Naive thymus-derived CD4-positive, alpha-beta T cell (primary cell): ENCODE measurements at regions of chr1 and their contacts with region 1.

Region 1: DNA sequence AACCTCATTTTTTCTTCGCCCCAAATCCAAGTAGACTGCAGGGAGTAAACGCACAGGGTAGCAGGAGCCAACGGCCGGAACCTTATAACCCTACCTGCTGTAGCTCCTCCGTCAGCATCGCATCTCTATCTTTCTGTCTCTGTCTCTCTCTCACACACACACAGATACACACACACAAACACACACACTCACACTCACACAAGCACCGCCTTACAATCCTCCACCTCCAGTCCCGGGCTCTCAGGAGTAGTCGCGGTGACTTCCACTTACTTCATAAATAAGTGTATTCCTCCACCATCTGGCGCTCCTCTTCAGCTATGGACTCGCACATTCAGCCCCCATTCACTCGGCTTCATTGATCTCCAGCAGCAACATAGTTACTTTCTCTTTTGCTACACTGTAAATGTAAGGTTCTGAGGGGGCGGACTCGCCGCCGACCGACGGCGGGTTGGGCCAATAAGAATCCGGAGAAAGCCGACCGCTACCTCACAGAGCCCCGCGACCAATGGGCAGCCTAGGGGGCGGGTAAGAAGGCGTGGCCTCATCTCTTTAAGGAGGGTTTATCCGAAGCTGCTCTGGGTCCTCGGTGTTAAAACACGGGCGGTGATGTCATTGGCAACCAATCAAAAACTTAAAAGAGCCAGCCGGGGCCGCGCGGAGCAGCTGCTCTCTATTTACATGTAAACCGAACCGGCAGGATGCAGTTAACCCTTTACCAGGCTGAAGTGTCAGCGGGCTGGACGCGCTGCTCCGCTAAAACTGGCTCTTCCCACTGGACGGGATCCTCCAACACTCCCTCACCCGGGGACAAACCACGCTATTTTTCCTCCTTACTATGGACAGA is at the start of gene DUSP10:
- DNase-seq: peak; percentile 88 to 100 (median 99)
- ATAC-seq: peak; percentile 91
- H3K4me3 ChIP-seq: peak within 1 kb of the TSS; percentile 85
- H3K4me3 Mint-ChIP-seq: peak within 1 kb of the TSS in 1 of 10 donors; percentile 33
- H3K27ac ChIP-seq: peak within 1 kb of the TSS; percentile 94
- H3K27ac Mint-ChIP-seq: peak within 1 kb of the TSS in 3 of 9 donors; percentile 39 to 83 (median 50)
- H3K4me1 ChIP-seq: peaks cover 9 to 17% of the 10 kb centered on the region in 2 donors
- H3K4me1 Mint-ChIP-seq: peaks cover 0 to 32% (median 21%) of the 10 kb centered on the region in 7 donors
- H3K27me3 ChIP-seq: no peaks in the 10 kb centered on the region
- H3K27me3 Mint-ChIP-seq: no peaks in the 10 kb centered on the region
- total RNA-seq, gene DUSP10: 2.5 to 60.6 (median 19.0) TPM

Region 2: GRCh38 chr1:221543529-221544120 is 198.3 kb before region 1 on chr1:
- CTCF ChIA-PET with region 1: interaction called, 3 read pairs
- POLR2A ChIA-PET with region 1: interaction called, 3 read pairs
- intact Hi-C with region 1: loop called (anchors 1 kb)
- DNase-seq: peak in 1 of 9 donors; percentile 4
- ATAC-seq: no peak
- H3K4me3 ChIP-seq: no peak overlapping the region
- H3K4me3 Mint-ChIP-seq: no peak overlapping the region
- H3K27ac ChIP-seq: no peak overlapping the region
- H3K27ac Mint-ChIP-seq: peak overlapping the region in 1 of 9 donors; percentile 21
- H3K4me1 ChIP-seq: no peaks in the 10 kb centered on the region
- H3K4me1 Mint-ChIP-seq: peaks cover 0 to 3% (median 0%) of the 10 kb centered on the region in 7 donors
- H3K27me3 ChIP-seq: no peaks in the 10 kb centered on the region
- H3K27me3 Mint-ChIP-seq: peaks cover 5 to 27% (median 13%) of the 10 kb centered on the region in 5 donors

Region 3: DNA sequence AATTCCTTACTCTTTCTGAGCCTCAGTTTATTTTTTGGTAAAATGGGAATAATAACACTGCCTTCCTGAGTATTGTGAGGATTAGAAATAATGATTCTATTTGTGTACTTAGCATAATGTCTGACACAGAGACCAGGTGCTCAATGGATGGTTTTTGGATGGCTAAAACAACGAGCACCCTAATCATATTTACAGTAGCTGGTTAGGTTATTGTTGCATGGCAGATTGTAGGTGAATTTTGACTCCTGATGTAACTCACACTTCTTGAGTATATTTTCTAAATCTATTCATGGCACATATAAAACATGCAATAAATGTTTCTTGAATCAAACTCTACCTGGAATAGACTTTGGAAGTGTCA is 11.9 kb after region 1 on chr1:
- CTCF ChIA-PET with region 1: interaction called, 3 read pairs
- POLR2A ChIA-PET with region 1: interaction called, 4 read pairs
- intact Hi-C with region 1: loop called in 1 of 2 experiments (anchors 1 kb)
- DNase-seq: no peak
- ATAC-seq: no peak
- H3K4me3 ChIP-seq: no peak overlapping the region
- H3K4me3 Mint-ChIP-seq: peak overlapping the region in 1 of 10 donors; percentile 67
- H3K27ac ChIP-seq: no peak overlapping the region
- H3K27ac Mint-ChIP-seq: peak overlapping the region in 1 of 9 donors; percentile 60
- H3K4me1 ChIP-seq: no peaks in the 10 kb centered on the region
- H3K4me1 Mint-ChIP-seq: peaks cover 0 to 59% (median 4%) of the 10 kb centered on the region in 7 donors
- H3K27me3 ChIP-seq: no peaks in the 10 kb centered on the region
- H3K27me3 Mint-ChIP-seq: no peaks in the 10 kb centered on the region

Region 4: DNA sequence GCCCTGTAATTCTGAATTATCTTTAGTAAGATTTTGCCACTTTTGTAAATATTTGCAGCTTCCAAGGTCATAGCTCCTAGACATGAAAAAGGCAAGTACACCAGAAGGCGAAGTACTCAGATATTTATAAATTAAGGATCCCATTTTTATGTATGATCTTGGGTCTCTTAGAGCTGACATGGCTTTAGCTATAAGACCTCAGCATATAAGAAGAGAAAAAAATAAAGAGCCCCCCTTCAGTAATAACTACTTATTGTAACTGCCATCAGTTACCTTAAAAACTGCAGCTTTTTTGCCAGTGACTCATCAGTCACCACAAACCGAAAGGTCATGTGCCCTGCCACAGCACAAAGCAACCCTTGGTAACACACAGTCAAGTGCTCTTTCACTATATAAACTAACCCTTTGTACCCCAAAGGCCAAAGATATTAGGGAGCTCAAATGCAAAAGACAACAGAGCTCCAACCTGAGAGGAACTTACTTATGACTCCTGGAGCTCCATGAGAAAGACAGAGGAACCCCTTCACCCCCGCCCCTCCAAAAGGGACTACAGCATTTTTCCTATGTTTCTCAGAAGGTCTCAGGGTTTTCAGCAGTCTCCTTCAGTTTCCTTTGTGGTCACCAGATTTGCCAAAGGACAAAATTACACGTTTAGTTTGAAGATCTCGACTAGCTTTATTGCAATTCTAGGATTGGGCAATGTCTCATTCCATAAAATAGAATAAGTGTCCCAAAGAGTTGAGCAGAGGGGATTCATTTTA is 219.8 kb after region 1 on chr1:
- CTCF ChIA-PET with region 1: no interaction called
- POLR2A ChIA-PET with region 1: no interaction called
- intact Hi-C with region 1: loop called in 1 of 2 experiments (anchors 2 kb)
- DNase-seq: peak in 1 of 9 donors; percentile 57
- ATAC-seq: peak; percentile 67
- H3K4me3 ChIP-seq: no peak overlapping the region
- H3K4me3 Mint-ChIP-seq: peak overlapping the region in 1 of 10 donors; percentile 34
- H3K27ac ChIP-seq: no peak overlapping the region
- H3K27ac Mint-ChIP-seq: peak overlapping the region in 1 of 9 donors; percentile 54
- H3K4me1 ChIP-seq: no peaks in the 10 kb centered on the region
- H3K4me1 Mint-ChIP-seq: peaks cover 0 to 20% (median 3%) of the 10 kb centered on the region in 7 donors
- H3K27me3 ChIP-seq: no peaks in the 10 kb centered on the region
- H3K27me3 Mint-ChIP-seq: no peaks in the 10 kb centered on the region

Region 5: DNA sequence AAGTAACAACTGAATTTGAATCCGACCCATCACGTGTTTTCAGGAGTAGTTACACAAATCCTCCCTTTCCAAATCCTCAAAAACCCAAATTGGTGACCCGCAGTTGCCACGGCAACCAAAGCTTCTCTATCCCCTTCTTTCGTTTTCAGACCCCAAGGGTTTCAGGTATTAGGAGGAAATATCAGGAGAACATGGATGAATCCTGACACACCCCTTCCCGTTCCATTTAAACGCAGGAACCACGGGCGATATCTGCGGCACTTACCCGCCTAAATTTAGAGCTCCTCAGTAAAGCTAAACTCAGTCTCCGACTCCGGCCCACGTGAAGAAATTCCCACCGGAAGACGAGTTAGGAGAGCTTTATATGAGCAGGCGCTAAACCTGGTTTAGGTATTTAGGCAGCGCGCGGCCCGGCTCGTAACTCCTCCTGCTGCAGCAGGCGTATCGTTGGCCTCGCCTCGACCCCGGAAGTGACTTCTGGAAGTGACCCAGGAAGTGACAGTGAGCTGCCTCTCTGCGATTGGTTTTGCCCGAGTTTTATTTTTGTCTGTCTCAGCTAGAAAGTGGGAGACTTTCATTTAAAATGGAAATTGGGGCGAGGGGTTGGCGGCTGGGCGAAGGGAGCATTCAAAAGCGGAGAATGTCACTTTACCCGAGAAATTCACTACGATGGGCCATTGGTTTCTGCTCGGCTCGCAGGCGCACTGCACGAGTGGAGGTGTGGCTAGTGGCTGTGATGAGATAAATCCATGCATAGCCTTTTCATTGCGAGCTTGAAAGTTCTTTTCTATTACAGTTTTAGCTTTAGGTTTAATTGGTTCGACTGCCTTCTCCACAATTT is 847.7 kb after region 1 on chr1 and contains the start of gene TAF1A:
- CTCF ChIA-PET with region 1: no interaction called
- POLR2A ChIA-PET with region 1: no interaction called
- intact Hi-C with region 1: loop called in 1 of 2 experiments (anchors 1 kb)
- DNase-seq: peak; percentile 53 to 92 (median 87)
- ATAC-seq: peak; percentile 100
- H3K4me3 ChIP-seq: peak within 1 kb of the TSS; percentile 93
- H3K4me3 Mint-ChIP-seq: peak within 1 kb of the TSS; percentile 86 to 99 (median 96)
- H3K27ac ChIP-seq: peak within 1 kb of the TSS; percentile 85
- H3K27ac Mint-ChIP-seq: peak within 1 kb of the TSS; percentile 94 to 99 (median 97)
- H3K4me1 ChIP-seq: peaks cover 6 to 18% of the 10 kb centered on the region in 2 donors
- H3K4me1 Mint-ChIP-seq: peaks cover 21 to 68% (median 57%) of the 10 kb centered on the region in 7 donors
- H3K27me3 ChIP-seq: no peaks in the 10 kb centered on the region
- H3K27me3 Mint-ChIP-seq: peaks cover 0 to 4% (median 0%) of the 10 kb centered on the region in 5 donors
- total RNA-seq, gene TAF1A: 6.5 to 17.9 (median 9.3) TPM

Region 6: GRCh38 chr1:223142795-223143536 is 1401.0 kb after region 1 on chr1 and contains the start of gene TLR5:
- CTCF ChIA-PET with region 1: no interaction called
- POLR2A ChIA-PET with region 1: no interaction called
- intact Hi-C with region 1: loop called in 1 of 2 experiments (anchors 5 kb)
- DNase-seq: peak; percentile 81 to 92 (median 87)
- ATAC-seq: peak; percentile 94
- H3K4me3 ChIP-seq: peak within 1 kb of the TSS; percentile 65
- H3K4me3 Mint-ChIP-seq: peak within 1 kb of the TSS; percentile 69 to 89 (median 81)
- H3K27ac ChIP-seq: peak within 1 kb of the TSS; percentile 69
- H3K27ac Mint-ChIP-seq: peak within 1 kb of the TSS in 8 of 9 donors; percentile 48 to 95 (median 90)
- H3K4me1 ChIP-seq: peaks cover 13 to 15% of the 10 kb centered on the region in 2 donors
- H3K4me1 Mint-ChIP-seq: peaks cover 13 to 35% (median 27%) of the 10 kb centered on the region in 7 donors
- H3K27me3 ChIP-seq: no peaks in the 10 kb centered on the region
- H3K27me3 Mint-ChIP-seq: peaks cover 0 to 10% (median 0%) of the 10 kb centered on the region in 5 donors
- total RNA-seq, gene TLR5: 3.1 to 8.0 (median 6.6) TPM in 4 of 5 experiments, not detected in the other